HCT116 (cell line): ENCODE measurements at regions of chr12 and their contacts with region 1.

Region 1: GRCh38 chr12:54279866-54280467 is at the start of gene CBX5:
- DNase-seq: peak; percentile 98
- ATAC-seq: peak; percentile 58
- H3K4me3 ChIP-seq: peak within 1 kb of the TSS; percentile 81 to 96
- H3K27ac ChIP-seq: peak within 1 kb of the TSS; percentile 93
- H3K4me1 ChIP-seq: peaks cover 15 to 44% of the 10 kb centered on the region in 2 experiments
- H3K27me3 ChIP-seq: no peaks in the 10 kb centered on the region
- CTCF ChIP-seq: no peak
- POLR2A ChIP-seq: no peak
- RAD21 ChIP-seq: no peak
- total RNA-seq, gene CBX5: 72.3 TPM

Region 2: DNA sequence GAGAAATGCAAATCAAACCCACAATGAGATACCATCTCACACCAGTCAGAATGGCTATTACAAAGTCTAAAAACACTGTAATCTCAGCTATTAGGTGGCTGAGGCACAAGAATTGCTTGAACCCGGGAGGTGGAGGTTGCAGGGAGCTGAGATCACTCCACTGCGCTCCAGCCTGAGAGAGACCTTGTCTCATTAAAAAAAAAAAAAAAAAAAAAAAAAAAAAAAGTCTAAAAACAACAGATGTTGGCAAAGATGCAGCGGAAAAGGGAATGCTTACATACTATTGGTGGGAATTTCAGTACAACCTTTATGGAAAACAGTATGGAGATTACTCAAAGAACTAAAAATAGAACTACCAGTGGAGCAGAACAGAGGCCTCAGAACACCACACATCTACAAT is 634.8 kb before region 1 on chr12:
- CTCF ChIA-PET with region 1: no interaction called
- POLR2A ChIA-PET with region 1: no interaction called
- RAD21 ChIA-PET with region 1: no interaction called
- intact Hi-C with region 1: no loop called
- DNase-seq: no peak
- ATAC-seq: no peak
- H3K4me3 ChIP-seq: no peak overlapping the region
- H3K27ac ChIP-seq: no peak overlapping the region
- H3K4me1 ChIP-seq: no peaks in the 10 kb centered on the region
- H3K27me3 ChIP-seq: no peaks in the 10 kb centered on the region
- CTCF ChIP-seq: no peak
- POLR2A ChIP-seq: no peak
- RAD21 ChIP-seq: no peak

Region 3: DNA sequence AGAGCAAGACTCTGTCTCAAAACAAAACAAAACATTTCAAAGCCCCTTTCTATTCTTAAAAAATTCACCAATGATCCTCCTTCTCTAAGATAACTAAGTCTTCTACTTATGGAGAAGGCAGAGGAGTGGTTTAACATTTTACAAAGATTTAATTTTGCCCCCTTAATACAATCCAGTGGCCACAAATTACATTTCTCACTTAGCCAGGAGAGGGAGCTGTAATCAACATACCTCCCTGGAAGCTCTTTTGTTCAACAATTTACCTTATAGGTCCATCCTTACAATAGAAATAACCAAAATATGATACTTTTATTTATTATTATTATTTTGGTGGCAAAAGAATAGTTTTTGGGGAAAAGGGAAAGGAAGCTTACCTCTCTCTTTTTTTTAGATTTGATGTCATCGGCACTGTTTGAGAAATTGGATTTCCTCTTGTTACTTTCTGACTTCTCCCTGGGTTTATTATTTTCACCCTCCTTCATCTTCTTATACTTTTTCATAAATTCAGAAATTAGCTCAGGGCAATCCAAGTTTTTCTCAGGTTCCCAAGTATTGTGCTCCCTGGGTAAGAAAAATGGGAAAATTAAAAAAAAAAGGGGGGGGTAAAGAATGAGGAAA is 28.2 kb before region 1 on chr12:
- CTCF ChIA-PET with region 1: interaction called, 5 read pairs
- POLR2A ChIA-PET with region 1: interaction called, 17 read pairs
- RAD21 ChIA-PET with region 1: interaction called, 3 to 4 read pairs
- intact Hi-C with region 1: loop called (anchors 2 kb)
- DNase-seq: peak; percentile 37
- ATAC-seq: peak; percentile 64
- H3K4me3 ChIP-seq: no peak overlapping the region
- H3K27ac ChIP-seq: no peak overlapping the region
- H3K4me1 ChIP-seq: peaks cover 12 to 13% of the 10 kb centered on the region in 2 experiments
- H3K27me3 ChIP-seq: no peaks in the 10 kb centered on the region
- CTCF ChIP-seq: peak; percentile 64 to 75 (median 64); a peak in 5 of 6 replicates
- POLR2A ChIP-seq: no peak
- RAD21 ChIP-seq: peak; percentile 66

Region 4: GRCh38 chr12:54266852-54267251 is 13.1 kb before region 1 on chr12:
- CTCF ChIA-PET with region 1: no interaction called
- POLR2A ChIA-PET with region 1: interaction called, 17 read pairs
- RAD21 ChIA-PET with region 1: no interaction called
- intact Hi-C with region 1: no loop called
- DNase-seq: no peak
- ATAC-seq: no peak
- H3K4me3 ChIP-seq: no peak overlapping the region
- H3K27ac ChIP-seq: no peak overlapping the region
- H3K4me1 ChIP-seq: peaks cover 13 to 16% of the 10 kb centered on the region in 2 experiments
- H3K27me3 ChIP-seq: no peaks in the 10 kb centered on the region
- CTCF ChIP-seq: no peak
- POLR2A ChIP-seq: no peak
- RAD21 ChIP-seq: no peak

Region 5: GRCh38 chr12:54300732-54301427 is 20.9 kb after region 1 on chr12 and contains the start of gene NFE2:
- CTCF ChIA-PET with region 1: no interaction called
- POLR2A ChIA-PET with region 1: interaction called, 10 read pairs
- RAD21 ChIA-PET with region 1: interaction called in 1 of 2 experiments, 3 read pairs
- intact Hi-C with region 1: no loop called
- DNase-seq: no peak
- ATAC-seq: peak; percentile 90
- H3K4me3 ChIP-seq: peak within 1 kb of the TSS; percentile 31 to 55
- H3K27ac ChIP-seq: peak within 1 kb of the TSS; percentile 39; the same call in 1 of the 2 replicates
- H3K4me1 ChIP-seq: peaks cover 31 to 33% of the 10 kb centered on the region in 2 experiments
- H3K27me3 ChIP-seq: peaks cover 12% of the 10 kb centered on the region; the same call in 1 of the 2 replicates
- CTCF ChIP-seq: no peak
- POLR2A ChIP-seq: no peak
- RAD21 ChIP-seq: no peak
- total RNA-seq, gene NFE2: 1.3 TPM

Region 6: DNA sequence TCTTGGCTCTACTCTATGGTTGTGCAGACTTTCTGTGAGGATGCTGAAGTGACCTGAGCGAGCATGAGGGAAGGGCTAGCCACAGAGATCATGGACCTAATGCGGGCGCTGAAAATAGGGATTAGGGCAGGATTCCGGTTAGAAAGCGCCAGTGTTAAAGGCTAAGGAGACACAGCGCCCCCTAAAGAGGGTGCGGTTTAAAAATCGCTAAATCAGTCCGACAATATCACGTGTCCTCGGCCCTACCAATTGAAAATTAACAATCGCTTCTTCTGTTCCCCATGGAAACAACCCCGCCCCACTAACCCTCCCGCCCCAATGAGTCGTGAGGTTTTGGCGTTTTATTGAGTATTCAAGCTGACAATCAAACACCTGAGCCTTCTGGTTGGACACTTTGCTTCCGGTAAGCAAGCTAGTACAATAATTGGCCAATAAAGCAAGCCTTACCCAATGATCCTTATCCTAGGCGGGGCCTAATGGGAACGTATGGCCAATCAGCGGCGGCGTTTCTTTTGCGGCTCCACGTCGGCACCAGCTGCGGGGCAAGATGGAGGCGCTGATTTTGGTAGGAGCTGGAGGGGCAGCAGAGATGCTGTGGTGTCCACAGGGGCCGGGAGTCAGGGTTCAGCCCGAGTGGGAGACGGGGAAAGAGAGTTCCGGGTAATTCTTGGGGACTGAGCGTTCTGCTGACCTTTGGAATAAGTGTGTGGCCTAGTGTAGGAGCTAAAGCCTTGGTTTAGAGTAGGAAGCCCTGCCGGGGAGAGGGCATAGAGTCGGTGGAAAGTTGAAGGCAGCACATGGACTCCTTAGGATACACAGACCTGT is 44.9 kb after region 1 on chr12 and contains the start of gene COPZ1:
- CTCF ChIA-PET with region 1: interaction called, 7 read pairs
- POLR2A ChIA-PET with region 1: interaction called, 73 read pairs
- RAD21 ChIA-PET with region 1: no interaction called
- intact Hi-C with region 1: loop called (anchors 1 kb)
- DNase-seq: peak; percentile 99
- ATAC-seq: peak; percentile 86
- H3K4me3 ChIP-seq: peak within 1 kb of the TSS; percentile 98
- H3K27ac ChIP-seq: peak within 1 kb of the TSS; percentile 90
- H3K4me1 ChIP-seq: peaks cover 35 to 43% of the 10 kb centered on the region in 2 experiments
- H3K27me3 ChIP-seq: no peaks in the 10 kb centered on the region
- CTCF ChIP-seq: peak; percentile 79 to 85 (median 79)
- POLR2A ChIP-seq: peak; percentile 63
- RAD21 ChIP-seq: peak; percentile 90
- total RNA-seq, gene COPZ1: 191 TPM

Region 7: DNA sequence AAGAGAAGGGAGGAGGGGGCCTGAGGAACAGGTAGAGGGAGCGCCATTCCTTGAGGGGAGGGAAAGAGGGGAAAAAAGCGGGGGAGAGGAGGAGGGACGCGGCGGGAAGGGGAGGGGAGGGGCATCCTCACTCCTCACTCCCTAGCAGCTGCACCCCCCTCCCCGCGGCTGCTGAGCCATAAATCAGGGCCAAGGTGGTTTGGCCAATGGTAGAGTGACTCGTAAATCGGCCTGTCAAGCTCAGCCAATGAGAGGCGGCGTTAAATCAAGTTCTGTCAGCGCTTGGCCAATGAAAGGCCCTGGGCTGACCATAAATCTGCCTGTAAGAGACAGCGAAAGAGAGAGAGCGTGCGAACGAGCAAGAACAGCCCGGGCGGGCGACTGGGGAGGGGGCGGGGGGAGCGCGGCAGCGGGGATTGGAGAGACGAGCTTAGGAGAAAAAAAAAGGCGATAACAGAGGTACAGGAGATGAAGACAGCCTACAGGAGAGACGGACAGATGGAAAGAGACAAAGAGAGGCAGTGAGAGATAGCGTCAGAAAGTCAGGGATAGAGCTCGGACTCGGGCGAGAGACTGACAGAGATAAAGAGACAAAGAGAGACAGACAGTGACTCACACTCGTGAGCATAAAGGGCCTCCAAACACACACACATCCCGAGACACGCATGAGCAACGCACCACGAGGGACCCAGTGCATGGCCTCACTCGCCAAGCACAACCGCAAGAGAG is 79.2 kb after region 1 on chr12:
- CTCF ChIA-PET with region 1: no interaction called
- POLR2A ChIA-PET with region 1: interaction called, 14 read pairs
- RAD21 ChIA-PET with region 1: interaction called in 1 of 2 experiments, 3 read pairs
- intact Hi-C with region 1: no loop called
- DNase-seq: peak; percentile 99
- ATAC-seq: peak; percentile 89
- H3K4me3 ChIP-seq: peak overlapping the region; percentile 49 to 68
- H3K27ac ChIP-seq: peak overlapping the region; percentile 61
- H3K4me1 ChIP-seq: peaks cover 26 to 36% of the 10 kb centered on the region in 2 experiments
- H3K27me3 ChIP-seq: no peaks in the 10 kb centered on the region
- CTCF ChIP-seq: no peak
- POLR2A ChIP-seq: no peak
- RAD21 ChIP-seq: no peak